Esophagus muscularis mucosa (tissue), 4 donors: ENCODE measurements at regions of chr17 and their contacts with region 1.

Region 1: DNA sequence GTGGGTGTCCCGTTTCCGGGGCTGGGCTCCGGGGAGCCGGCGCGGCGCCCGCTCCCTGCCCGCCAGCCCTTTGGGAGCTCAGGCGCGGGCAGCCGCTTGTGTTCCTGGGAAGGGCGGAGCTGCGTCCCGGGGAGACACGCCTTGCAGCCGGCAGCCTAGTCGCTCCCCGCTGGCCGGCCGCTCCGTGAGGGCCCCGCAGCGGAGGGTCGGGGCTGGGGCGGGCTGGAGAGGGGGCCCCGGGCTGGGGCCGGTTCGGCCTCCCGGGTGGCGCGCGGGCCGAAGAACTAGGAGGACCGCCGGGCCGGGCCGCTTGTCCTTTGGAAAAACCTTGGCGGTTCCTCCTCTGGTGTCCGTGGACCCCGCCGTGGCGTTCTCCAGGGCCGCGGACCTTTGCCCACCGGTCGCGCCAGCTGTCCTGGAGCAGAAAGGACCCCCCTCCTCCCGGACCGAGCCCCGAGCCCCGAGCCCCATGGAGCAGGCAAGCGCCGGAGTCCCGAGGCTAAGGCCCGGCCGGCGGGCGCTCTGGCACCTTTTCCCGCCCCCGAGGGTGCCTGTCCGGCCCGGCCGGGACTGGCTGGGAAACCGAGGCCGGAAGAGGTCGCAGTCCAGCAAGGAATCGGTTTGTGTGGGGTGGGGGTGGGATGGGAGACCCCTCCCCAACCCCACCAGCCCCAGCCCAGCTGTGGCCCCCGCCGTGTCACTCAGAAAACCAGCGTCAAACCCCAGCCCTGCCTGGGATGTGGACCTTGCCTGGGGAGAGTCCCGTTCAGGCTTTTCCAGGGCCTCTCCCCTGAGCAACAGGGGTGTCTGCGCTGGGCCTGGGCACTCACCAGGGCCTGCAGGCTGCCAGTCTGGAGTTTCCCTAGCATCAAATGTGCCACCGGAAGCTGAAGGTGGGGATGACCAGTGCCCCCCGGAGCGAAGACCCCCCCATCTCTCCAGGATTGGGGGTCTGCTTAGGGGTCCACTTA is 6.8 kb upstream of the TBC1D3B start:
- DNase-seq: no peak
- H3K4me3 ChIP-seq: peak overlapping the region; percentile 58 to 78 (median 64)
- H3K27ac ChIP-seq: peak overlapping the region; percentile 31 to 70 (median 58)
- H3K4me1 ChIP-seq: peaks cover 0 to 26% (median 20%) of the 10 kb centered on the region in 4 donors
- H3K27me3 ChIP-seq: peaks cover 0 to 33% (median 10%) of the 10 kb centered on the region in 4 donors
- CTCF ChIP-seq: no peak
- EP300 ChIP-seq: no peak
- POLR2A ChIP-seq: no peak

Region 2: GRCh38 chr17:36486204-36487194 is 303.2 kb after region 1 on chr17 and contains the start of gene ZNHIT3:
- intact Hi-C with region 1: loop called (anchors 10 kb)
- DNase-seq: peak; percentile 97
- H3K4me3 ChIP-seq: peak within 1 kb of the TSS; percentile 81 to 99 (median 96)
- H3K27ac ChIP-seq: peak within 1 kb of the TSS; percentile 83 to 90 (median 86)
- H3K4me1 ChIP-seq: peaks cover 22 to 51% (median 41%) of the 10 kb centered on the region in 4 donors
- H3K27me3 ChIP-seq: peaks cover 0 to 7% (median 0%) of the 10 kb centered on the region in 4 donors
- CTCF ChIP-seq: peak in 1 of 3 experiments; percentile 24
- EP300 ChIP-seq: no peak
- POLR2A ChIP-seq: no peak
- total RNA-seq, gene ZNHIT3: 18.4 to 35.1 (median 25.8) TPM